HepG2 (cell line): ENCODE measurements at regions of chr14 and their contacts with region 1.

Region 1: DNA sequence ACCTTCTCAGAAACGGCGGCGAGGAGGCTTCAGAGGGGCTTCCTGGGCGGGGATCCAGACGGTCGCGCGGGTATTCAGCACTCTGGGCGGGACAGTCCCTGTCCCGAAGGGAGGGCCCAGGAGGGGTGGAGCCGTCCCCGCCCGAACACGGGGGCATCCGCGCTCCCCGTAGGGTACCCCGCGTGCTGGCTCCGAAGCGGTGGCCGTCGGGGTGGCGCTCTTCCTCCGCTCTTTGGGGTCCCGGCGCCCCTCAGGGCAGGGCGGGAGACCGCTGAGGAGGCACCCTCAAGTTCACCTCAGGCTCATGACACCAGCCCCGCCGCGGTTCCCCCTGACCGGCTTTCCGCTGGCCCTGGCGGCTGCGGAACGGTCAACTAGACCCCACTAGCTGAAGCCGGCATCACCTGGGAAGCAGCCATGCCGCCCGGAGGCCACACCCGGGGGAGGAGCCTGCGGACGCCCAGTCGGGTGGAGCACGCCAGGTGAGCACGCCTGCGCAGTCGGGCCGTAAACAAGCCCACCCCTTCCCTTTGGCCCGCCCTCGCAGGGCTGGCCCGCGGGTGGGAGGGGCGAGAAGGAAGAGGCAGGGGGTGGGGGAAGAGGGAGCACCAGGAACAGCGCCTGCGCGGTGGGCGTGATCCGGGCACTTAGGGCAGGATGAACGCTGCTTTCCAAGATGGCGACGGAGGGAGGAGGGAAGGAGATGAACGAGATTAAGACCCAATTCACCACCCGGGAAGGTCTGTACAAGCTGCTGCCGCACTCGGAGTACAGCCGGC is at the start of gene WDR20:
- DNase-seq: peak; percentile 95
- ATAC-seq: peak; percentile 94
- H3K4me3 ChIP-seq: peak within 1 kb of the TSS; percentile 95 to 99 (median 99)
- H3K27ac ChIP-seq: peak within 1 kb of the TSS; percentile 78
- H3K4me1 ChIP-seq: peaks cover 15% of the 10 kb centered on the region
- H3K27me3 ChIP-seq: no peaks in the 10 kb centered on the region; a peak in 1 of 5 replicates
- CTCF ChIP-seq: peak; percentile 70
- EP300 ChIP-seq: no peak
- POLR2A ChIP-seq: peak; percentile 71 to 78
- RAD21 ChIP-seq: peak; percentile 14; the same call in 1 of the 2 replicates
- total RNA-seq, gene WDR20: 23.2 and 30.5 TPM in 2 replicates

Region 2: GRCh38 chr14:102209217-102209966 is 70.0 kb after region 1 on chr14:
- CTCF ChIA-PET with region 1: no interaction called
- POLR2A ChIA-PET with region 1: no interaction called
- in situ Hi-C with region 1: no loop called
- intact Hi-C with region 1: loop called (anchors 5 kb)
- DNase-seq: peak; percentile 58
- ATAC-seq: peak; percentile 90
- H3K4me3 ChIP-seq: no peak overlapping the region
- H3K27ac ChIP-seq: no peak overlapping the region
- H3K4me1 ChIP-seq: no peaks in the 10 kb centered on the region
- H3K27me3 ChIP-seq: no peaks in the 10 kb centered on the region
- CTCF ChIP-seq: peak; percentile 62
- EP300 ChIP-seq: no peak
- POLR2A ChIP-seq: no peak
- RAD21 ChIP-seq: peak; percentile 44